Activated T-helper 2 cell treated with anti-CD3 and anti-CD28 coated beads, Interferon-gamma antibody, Interleukin-2, Interleukin-4, amounts not matched to agents 10 μg/mL and 5 μg/mL and 100 μg/mL, durations not matched to agents 14 hours and 24 hours and 36 hours (primary cell): ENCODE measurements at regions of chr1 and their contacts with region 1.

Region 1: GRCh38 chr1:90729504-90730242 is 12.6 kb upstream of the BARHL2 start:
- DNase-seq: no peak
- H3K4me3 Mint-ChIP-seq: no peak overlapping the region
- H3K27ac Mint-ChIP-seq: no peak overlapping the region
- H3K4me1 Mint-ChIP-seq: peaks cover 21% of the 10 kb centered on the region
- H3K27me3 Mint-ChIP-seq: peaks cover 86% of the 10 kb centered on the region

Region 2: DNA sequence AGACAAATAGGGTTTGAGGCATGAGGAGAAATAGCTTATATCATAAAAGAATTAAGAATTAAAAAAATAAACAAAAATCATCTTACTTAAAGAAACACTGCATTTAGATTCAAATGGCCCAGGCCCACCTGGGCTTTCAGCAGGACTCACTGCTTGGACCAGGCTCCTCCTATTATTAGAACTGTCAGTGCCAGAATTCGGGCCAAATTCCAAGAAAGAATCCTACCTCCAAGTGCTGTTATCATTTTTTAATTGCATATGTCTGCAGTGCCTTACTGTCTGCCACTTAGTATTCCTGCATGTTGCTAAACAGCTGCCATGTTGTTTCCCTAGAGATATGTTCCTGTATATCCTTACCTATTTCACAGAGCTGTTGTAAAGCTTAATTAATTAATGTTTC is 124.6 kb before region 1 on chr1:
- intact Hi-C with region 1: no loop called
- DNase-seq: no peak
- H3K4me3 Mint-ChIP-seq: no peak overlapping the region
- H3K27ac Mint-ChIP-seq: no peak overlapping the region
- H3K4me1 Mint-ChIP-seq: no peaks in the 10 kb centered on the region
- H3K27me3 Mint-ChIP-seq: peaks cover 4% of the 10 kb centered on the region

Region 3: GRCh38 chr1:90707363-90707710 is 22.3 kb before region 1 on chr1:
- intact Hi-C with region 1: loop called (anchors 1 kb)
- DNase-seq: no peak
- H3K4me3 Mint-ChIP-seq: no peak overlapping the region
- H3K27ac Mint-ChIP-seq: no peak overlapping the region
- H3K4me1 Mint-ChIP-seq: peaks cover 5% of the 10 kb centered on the region
- H3K27me3 Mint-ChIP-seq: peaks cover 83% of the 10 kb centered on the region

Region 4: DNA sequence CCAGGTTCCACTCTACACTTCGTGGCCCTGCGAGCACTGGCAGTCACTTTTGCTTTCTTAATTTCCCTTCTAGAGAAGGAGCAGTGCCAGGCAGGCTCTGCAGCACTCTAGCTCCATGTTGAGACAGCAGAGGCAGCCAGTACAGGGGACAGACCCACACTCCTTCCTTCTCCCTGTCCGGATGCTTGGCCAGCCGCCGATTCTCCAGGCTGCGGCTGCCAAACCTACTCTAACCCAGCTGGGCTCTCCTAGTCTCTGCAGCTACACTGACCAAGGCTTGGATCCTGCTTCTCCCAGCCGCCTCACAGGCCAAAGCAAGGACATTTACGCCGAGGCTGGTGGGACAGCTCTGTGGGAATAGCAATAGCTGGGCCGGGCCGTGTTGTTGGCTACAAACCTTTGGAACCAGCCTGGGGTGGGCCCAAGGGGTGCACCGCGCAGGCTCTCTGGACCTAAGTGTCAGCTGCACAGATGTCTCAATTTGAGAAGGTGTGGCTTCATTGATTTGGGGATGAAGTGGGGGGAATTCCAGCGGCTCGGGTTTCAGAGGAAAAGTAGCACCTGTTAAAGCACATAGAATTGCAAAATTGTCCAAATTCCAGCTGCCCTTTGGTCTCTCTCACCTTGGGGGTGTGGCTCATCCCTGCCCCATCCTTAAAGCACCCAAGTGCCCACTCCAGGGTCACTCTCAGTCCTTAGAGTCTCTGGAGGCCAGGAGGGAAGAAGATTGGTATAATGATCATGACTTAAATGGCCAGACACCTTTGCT is 15.7 kb before region 1 on chr1:
- intact Hi-C with region 1: loop called (anchors 1 kb)
- DNase-seq: no peak
- H3K4me3 Mint-ChIP-seq: no peak overlapping the region
- H3K27ac Mint-ChIP-seq: no peak overlapping the region
- H3K4me1 Mint-ChIP-seq: peaks cover 5% of the 10 kb centered on the region
- H3K27me3 Mint-ChIP-seq: peaks cover 85% of the 10 kb centered on the region